MCF 10A (cell line): ENCODE measurements at regions of chr5 and their contacts with region 1.

Region 1: DNA sequence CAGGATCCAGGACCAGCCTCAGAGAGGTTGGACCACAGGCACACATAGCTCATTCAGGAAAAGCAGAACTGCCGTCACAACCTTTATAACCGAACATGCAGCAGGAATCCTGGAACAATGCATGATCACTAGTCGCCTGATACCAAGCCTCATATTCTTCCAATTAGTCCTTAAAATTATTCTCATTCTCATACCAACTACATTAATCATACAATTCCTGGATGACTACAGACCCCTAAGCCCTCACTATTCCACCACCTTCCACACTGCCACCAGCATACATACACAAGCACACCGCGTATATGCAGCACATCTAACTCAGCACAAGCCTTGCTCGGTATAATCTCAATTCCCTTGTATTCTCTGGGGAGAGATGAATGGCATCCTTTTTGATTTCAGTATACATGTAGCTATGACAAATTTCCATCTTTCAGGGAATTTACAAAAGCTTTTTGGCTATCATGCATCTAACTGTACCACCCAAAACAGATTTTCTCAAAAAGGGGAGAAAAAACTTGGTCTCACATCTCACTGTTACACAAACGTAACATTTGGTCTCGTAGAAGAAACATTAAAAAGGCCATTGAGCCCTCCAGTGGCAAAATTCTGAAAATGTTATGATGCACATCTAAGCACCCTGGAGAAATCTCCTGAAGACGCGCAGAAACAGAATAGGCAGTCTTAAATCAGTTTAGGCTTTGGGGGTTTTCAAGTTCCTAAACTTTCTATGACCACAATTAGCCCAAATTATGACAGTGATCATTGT is 46.2 kb downstream of the MCTP1 start:
- DNase-seq: peak; percentile 55
- H3K4me3 Mint-ChIP-seq: no peak overlapping the region
- H3K27ac Mint-ChIP-seq: no peak overlapping the region
- H3K4me1 Mint-ChIP-seq: peaks cover 6% of the 10 kb centered on the region
- H3K27me3 Mint-ChIP-seq: peaks cover 13% of the 10 kb centered on the region
- CTCF ChIP-seq: peak; percentile 43

Region 2: GRCh38 chr5:95223566-95224258 is 15.0 kb before region 1 on chr5:
- CTCF ChIA-PET with region 1: interaction called, 10 read pairs
- POLR2A ChIA-PET with region 1: no interaction called
- intact Hi-C with region 1: no loop called
- DNase-seq: no peak
- H3K4me3 Mint-ChIP-seq: no peak overlapping the region
- H3K27ac Mint-ChIP-seq: no peak overlapping the region
- H3K4me1 Mint-ChIP-seq: no peaks in the 10 kb centered on the region
- H3K27me3 Mint-ChIP-seq: no peaks in the 10 kb centered on the region
- CTCF ChIP-seq: no peak